CD4-positive, alpha-beta memory T cell (primary cell): ENCODE measurements at regions of chr2 and their contacts with region 1.

Region 1: DNA sequence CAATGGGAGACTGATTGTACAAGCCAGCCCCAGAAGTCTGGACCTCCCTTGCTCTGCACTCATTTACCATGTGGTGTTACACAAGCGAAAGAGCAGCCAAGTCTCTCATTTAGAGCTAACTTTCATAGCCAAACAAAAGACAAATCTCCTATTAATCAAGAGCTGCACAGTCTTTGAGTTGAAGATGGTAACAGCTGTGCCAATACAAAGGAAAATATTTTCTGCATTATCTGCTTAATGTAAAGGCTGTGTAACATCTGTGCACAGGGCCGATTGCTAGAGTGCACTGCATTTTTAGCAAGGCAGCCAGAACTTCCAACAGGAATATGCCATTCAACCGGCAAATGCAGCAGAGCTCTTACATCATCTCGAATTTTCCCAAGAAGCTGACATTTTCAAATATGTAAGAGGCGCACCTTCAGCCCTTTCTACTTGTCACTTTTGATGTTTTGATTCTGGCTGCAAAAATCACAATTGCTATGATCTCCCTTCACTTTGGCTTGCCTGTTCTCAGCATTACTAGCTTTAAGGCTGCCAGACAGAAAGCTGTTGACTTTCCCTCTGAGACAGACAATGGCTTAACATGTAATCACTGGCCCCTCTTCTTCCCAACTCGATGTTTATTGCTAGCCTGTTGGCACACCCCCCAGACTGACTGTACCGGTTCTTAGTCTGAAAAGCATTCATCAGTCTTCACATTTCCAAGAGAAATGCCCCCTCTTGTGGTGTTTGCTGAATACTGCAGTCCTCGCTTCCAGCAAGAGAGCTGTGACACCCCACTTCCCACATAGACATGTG is 96.9 kb upstream of the TANK start:
- DNase-seq: peak; percentile 56 to 64 (median 61)
- H3K4me3 ChIP-seq: no peak overlapping the region
- H3K4me3 Mint-ChIP-seq: no peak overlapping the region
- H3K27ac ChIP-seq: no peak overlapping the region
- H3K27ac Mint-ChIP-seq: peak overlapping the region in 1 of 7 donors; percentile 48
- H3K4me1 ChIP-seq: no peaks in the 10 kb centered on the region
- H3K4me1 Mint-ChIP-seq: peaks cover 3 to 6% (median 4%) of the 10 kb centered on the region in 4 donors
- H3K27me3 ChIP-seq: no peaks in the 10 kb centered on the region
- H3K27me3 Mint-ChIP-seq: peaks cover 0 to 2% of the 10 kb centered on the region in 2 donors

Region 2: GRCh38 chr2:159456491-159457426 is 1606.6 kb before region 1 on chr2:
- CTCF ChIA-PET with region 1: no interaction called
- POLR2A ChIA-PET with region 1: no interaction called
- intact Hi-C with region 1: no loop called
- DNase-seq: no peak
- H3K4me3 ChIP-seq: no peak overlapping the region
- H3K4me3 Mint-ChIP-seq: peak overlapping the region in 4 of 8 donors; percentile 1 to 32 (median 22)
- H3K27ac ChIP-seq: no peak overlapping the region
- H3K27ac Mint-ChIP-seq: no peak overlapping the region
- H3K4me1 ChIP-seq: peaks cover 26% of the 10 kb centered on the region
- H3K4me1 Mint-ChIP-seq: peaks cover 17 to 30% (median 26%) of the 10 kb centered on the region in 4 donors
- H3K27me3 ChIP-seq: no peaks in the 10 kb centered on the region
- H3K27me3 Mint-ChIP-seq: no peaks in the 10 kb centered on the region

Region 3: DNA sequence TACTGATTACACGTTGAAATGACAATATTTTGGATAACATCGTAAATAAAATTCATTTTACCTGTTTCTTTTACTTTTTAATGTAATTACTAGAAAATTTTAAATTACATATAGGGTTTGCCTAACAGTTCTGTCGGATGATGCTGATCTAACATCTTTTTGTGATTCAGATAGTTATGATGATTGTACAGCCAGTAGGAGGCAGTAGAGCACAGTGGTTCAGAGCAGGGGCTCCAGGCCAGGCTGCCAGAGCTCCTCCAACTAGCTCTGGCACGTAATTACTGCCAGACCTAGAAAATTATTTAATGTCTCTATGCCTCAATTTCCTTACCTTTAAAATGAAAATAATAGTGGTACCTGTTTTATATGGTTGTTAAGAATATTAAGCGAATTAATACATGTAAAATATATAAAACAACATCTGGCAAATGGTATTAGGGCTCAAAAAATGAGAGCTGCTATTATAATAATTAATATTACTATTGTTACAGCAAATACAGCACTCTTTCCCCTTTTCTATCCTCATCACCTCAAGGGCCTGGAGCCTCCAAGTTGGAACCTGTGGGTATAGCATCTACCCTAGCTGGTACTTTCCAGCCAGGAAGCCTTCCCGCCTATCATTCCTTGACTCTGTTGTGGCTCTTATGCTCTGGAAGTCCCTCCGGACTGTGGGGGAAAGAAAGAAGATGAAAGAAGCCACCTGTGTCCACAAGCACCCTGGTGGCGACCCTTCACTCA is 953.3 kb before region 1 on chr2:
- CTCF ChIA-PET with region 1: interaction called, 21 read pairs
- POLR2A ChIA-PET with region 1: no interaction called
- intact Hi-C with region 1: no loop called
- DNase-seq: peak; percentile 49 to 60 (median 55)
- H3K4me3 ChIP-seq: no peak overlapping the region
- H3K4me3 Mint-ChIP-seq: no peak overlapping the region
- H3K27ac ChIP-seq: no peak overlapping the region
- H3K27ac Mint-ChIP-seq: no peak overlapping the region
- H3K4me1 ChIP-seq: no peaks in the 10 kb centered on the region
- H3K4me1 Mint-ChIP-seq: no peaks in the 10 kb centered on the region
- H3K27me3 ChIP-seq: no peaks in the 10 kb centered on the region
- H3K27me3 Mint-ChIP-seq: peaks cover 11 to 16% of the 10 kb centered on the region in 2 donors

Region 4: GRCh38 chr2:160994141-160995002 is 69.0 kb before region 1 on chr2:
- CTCF ChIA-PET with region 1: interaction called, 28 read pairs
- POLR2A ChIA-PET with region 1: no interaction called
- intact Hi-C with region 1: no loop called
- DNase-seq: peak; percentile 77 to 81 (median 80)
- H3K4me3 ChIP-seq: no peak overlapping the region
- H3K4me3 Mint-ChIP-seq: peak overlapping the region in 7 of 8 donors; percentile 19 to 72 (median 64)
- H3K27ac ChIP-seq: no peak overlapping the region
- H3K27ac Mint-ChIP-seq: peak overlapping the region in 4 of 7 donors; percentile 1 to 78 (median 64)
- H3K4me1 ChIP-seq: peaks cover 5% of the 10 kb centered on the region
- H3K4me1 Mint-ChIP-seq: peaks cover 8 to 10% (median 9%) of the 10 kb centered on the region in 4 donors
- H3K27me3 ChIP-seq: no peaks in the 10 kb centered on the region
- H3K27me3 Mint-ChIP-seq: no peaks in the 10 kb centered on the region

Region 5: GRCh38 chr2:161077367-161078210 is 14.2 kb after region 1 on chr2:
- CTCF ChIA-PET with region 1: interaction called, 37 read pairs
- POLR2A ChIA-PET with region 1: interaction called, 3 read pairs
- intact Hi-C with region 1: no loop called
- DNase-seq: peak; percentile 69 to 86 (median 76)
- H3K4me3 ChIP-seq: peak overlapping the region in 1 of 2 donors; percentile 16
- H3K4me3 Mint-ChIP-seq: peak overlapping the region; percentile 3 to 72 (median 64)
- H3K27ac ChIP-seq: peak overlapping the region; percentile 6
- H3K27ac Mint-ChIP-seq: peak overlapping the region; percentile 55 to 90 (median 84)
- H3K4me1 ChIP-seq: peaks cover 31% of the 10 kb centered on the region
- H3K4me1 Mint-ChIP-seq: peaks cover 23 to 42% (median 29%) of the 10 kb centered on the region in 4 donors
- H3K27me3 ChIP-seq: no peaks in the 10 kb centered on the region
- H3K27me3 Mint-ChIP-seq: no peaks in the 10 kb centered on the region

Region 6: DNA sequence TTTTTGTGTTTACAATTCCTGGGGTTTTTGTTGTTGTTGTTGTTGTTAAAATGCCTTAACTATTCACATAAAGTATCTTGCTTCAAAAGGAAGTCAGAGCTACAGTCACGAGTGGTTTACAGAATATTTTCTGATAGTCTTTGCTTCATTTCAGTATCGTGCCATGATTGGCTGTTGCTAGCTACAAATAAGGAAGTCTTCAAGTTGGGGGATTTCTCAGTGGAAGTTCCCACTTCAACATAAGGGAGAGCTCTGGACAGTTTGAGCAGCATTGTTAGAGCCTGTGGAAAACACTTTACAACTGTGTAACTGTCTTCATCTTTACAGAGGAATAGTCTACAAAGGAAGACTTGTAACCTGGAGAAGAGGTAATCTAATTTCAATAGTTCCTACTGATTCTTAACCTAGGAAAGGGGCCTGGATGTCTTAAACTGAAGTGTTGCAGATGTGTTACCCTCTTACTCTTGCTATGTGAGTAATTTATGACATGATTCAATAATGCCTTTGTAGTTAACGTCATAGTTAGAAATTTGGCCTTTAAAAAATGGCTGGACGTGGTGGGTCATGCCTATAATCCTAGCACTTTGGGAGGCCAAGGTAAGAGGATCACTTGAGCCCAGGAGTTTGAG is 73.5 kb after region 1 on chr2:
- CTCF ChIA-PET with region 1: interaction called, 25 read pairs
- POLR2A ChIA-PET with region 1: interaction called, 3 read pairs
- intact Hi-C with region 1: loop called (anchors 5 kb)
- DNase-seq: peak; percentile 70 to 82 (median 74)
- H3K4me3 ChIP-seq: peak overlapping the region; percentile 48 to 90
- H3K4me3 Mint-ChIP-seq: peak overlapping the region; percentile 90 to 99 (median 95)
- H3K27ac ChIP-seq: peak overlapping the region; percentile 97
- H3K27ac Mint-ChIP-seq: peak overlapping the region; percentile 97 to 99 (median 99)
- H3K4me1 ChIP-seq: peaks cover 40% of the 10 kb centered on the region
- H3K4me1 Mint-ChIP-seq: peaks cover 34 to 55% (median 39%) of the 10 kb centered on the region in 4 donors
- H3K27me3 ChIP-seq: no peaks in the 10 kb centered on the region
- H3K27me3 Mint-ChIP-seq: no peaks in the 10 kb centered on the region

Region 7: GRCh38 chr2:161257123-161257952 is 194.0 kb after region 1 on chr2:
- CTCF ChIA-PET with region 1: no interaction called
- POLR2A ChIA-PET with region 1: no interaction called
- intact Hi-C with region 1: no loop called
- DNase-seq: no peak
- H3K4me3 ChIP-seq: no peak overlapping the region
- H3K4me3 Mint-ChIP-seq: no peak overlapping the region
- H3K27ac ChIP-seq: no peak overlapping the region
- H3K27ac Mint-ChIP-seq: no peak overlapping the region
- H3K4me1 ChIP-seq: no peaks in the 10 kb centered on the region
- H3K4me1 Mint-ChIP-seq: no peaks in the 10 kb centered on the region
- H3K27me3 ChIP-seq: no peaks in the 10 kb centered on the region
- H3K27me3 Mint-ChIP-seq: no peaks in the 10 kb centered on the region

Region 8: GRCh38 chr2:161273038-161273760 is 209.8 kb after region 1 on chr2:
- CTCF ChIA-PET with region 1: interaction called, 6 read pairs
- POLR2A ChIA-PET with region 1: no interaction called
- intact Hi-C with region 1: loop called (anchors 1 kb)
- DNase-seq: peak; percentile 39 to 65 (median 58)
- H3K4me3 ChIP-seq: no peak overlapping the region
- H3K4me3 Mint-ChIP-seq: no peak overlapping the region
- H3K27ac ChIP-seq: no peak overlapping the region
- H3K27ac Mint-ChIP-seq: no peak overlapping the region
- H3K4me1 ChIP-seq: no peaks in the 10 kb centered on the region
- H3K4me1 Mint-ChIP-seq: peaks cover 0 to 4% (median 2%) of the 10 kb centered on the region in 4 donors
- H3K27me3 ChIP-seq: no peaks in the 10 kb centered on the region
- H3K27me3 Mint-ChIP-seq: peaks cover 1 to 4% of the 10 kb centered on the region in 2 donors